ENCODE measurements at regions of chr2 and their contacts with region 1.

Region 1: GRCh38 chr2:37196320-37197195 is at the start of gene CEBPZOS:
- DNase-seq: peak; percentile 83 to 92 (median 83)
- ATAC-seq: peak; percentile 75 to 96 (median 94)
- H3K4me3 ChIP-seq: peak within 1 kb of the TSS; percentile 57 to 97 (median 88)
- H3K27ac ChIP-seq: peak within 1 kb of the TSS; percentile 37 to 93 (median 88)
- H3K4me1 ChIP-seq: peaks cover 0 to 27% (median 12%) of the 10 kb centered on the region in 12 donors
- H3K27me3 ChIP-seq: no peaks in the 10 kb centered on the region
- CTCF ChIP-seq: peak in 1 of 12 donors; percentile 7
- POLR2A ChIP-seq: peak; percentile 35 to 75
- total RNA-seq, gene CEBPZOS: 32.1 to 64.1 (median 54.2) TPM

Region 2: DNA sequence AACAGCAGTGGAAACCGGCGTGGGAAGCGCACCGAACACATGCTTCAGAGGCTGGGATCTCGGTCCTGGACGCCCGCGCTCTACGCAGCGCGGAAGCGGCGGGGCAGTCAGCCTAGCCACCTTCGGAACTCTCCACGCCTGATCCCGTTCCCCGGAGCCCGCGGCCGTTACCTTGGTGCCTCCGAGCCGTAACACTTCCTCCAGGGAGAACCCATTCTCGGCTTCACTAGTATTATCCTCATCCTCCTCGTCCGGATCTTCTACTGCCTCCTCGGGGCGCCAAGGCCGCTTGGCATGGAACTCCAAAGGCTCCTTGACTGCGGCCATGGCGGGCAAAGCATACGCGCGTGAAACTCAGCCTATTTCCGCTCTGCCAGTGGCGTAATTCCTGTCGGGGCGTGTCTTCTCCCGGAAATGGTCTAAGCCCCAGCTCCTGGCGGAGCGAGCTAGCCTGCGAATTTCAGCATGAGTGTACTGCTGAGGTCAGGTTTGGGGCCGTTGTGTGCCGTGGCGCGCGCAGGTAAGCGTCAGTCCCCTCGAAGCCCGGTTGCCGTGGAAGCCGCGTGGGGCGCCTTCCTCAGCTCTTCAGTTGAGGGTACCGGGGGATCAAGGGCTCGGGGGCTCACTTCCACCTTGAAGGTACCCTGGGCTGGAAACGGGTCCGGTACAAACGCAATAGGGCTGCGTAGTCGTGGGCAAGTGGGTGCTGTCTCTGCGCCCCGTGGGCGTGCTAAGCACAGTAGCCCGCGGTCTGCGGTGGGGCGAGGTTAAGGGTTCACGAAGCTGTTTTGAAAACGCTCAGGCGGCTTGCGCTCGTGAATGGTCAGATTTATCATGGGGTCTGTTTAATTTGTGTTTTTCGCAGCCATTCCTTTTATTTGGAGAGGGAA is 34.9 kb after region 1 on chr2 and contains the starts of genes CEBPZ and NDUFAF7:
- intact Hi-C with region 1: loop called in 1 of 10 experiments (anchors 5 kb)
- DNase-seq: peak; percentile 90 to 94 (median 92)
- ATAC-seq: peak; percentile 95 to 99 (median 98)
- H3K4me3 ChIP-seq: peak within 1 kb of the TSS; percentile 64 to 94 (median 86)
- H3K27ac ChIP-seq: peak within 1 kb of the TSS; percentile 83 to 96 (median 91)
- H3K4me1 ChIP-seq: peaks cover 9 to 42% (median 33%) of the 10 kb centered on the region in 12 donors
- H3K27me3 ChIP-seq: no peaks in the 10 kb centered on the region
- CTCF ChIP-seq: no peak
- POLR2A ChIP-seq: peak in 1 of 2 donors; percentile 68
- total RNA-seq, gene CEBPZ: 17.4 to 31.5 (median 25.3) TPM
- total RNA-seq, gene NDUFAF7: 15.8 to 33.0 (median 22.2) TPM

Measured in heart left ventricle (tissue), 16 donors.